B cell (primary cell): ENCODE measurements at regions of chr1 and their contacts with region 1.

Region 1: GRCh38 chr1:181088079-181089016 is at the start of gene IER5:
- DNase-seq: peak; percentile 99
- ATAC-seq: peak; percentile 74
- H3K4me3 ChIP-seq: peak within 1 kb of the TSS; percentile 94 to 99 (median 95)
- H3K4me3 Mint-ChIP-seq: peak within 1 kb of the TSS; percentile 100
- H3K27ac ChIP-seq: peak within 1 kb of the TSS; percentile 98 to 99
- H3K27ac Mint-ChIP-seq: peak within 1 kb of the TSS; percentile 100
- H3K4me1 ChIP-seq: peaks cover 42 to 48% of the 10 kb centered on the region in 2 donors
- H3K4me1 Mint-ChIP-seq: peaks cover 49% of the 10 kb centered on the region
- H3K27me3 ChIP-seq: no peaks in the 10 kb centered on the region
- H3K27me3 Mint-ChIP-seq: no peaks in the 10 kb centered on the region
- CTCF ChIP-seq: no peak
- total RNA-seq, gene IER5: 96.9 and 98.1 TPM in 2 replicates

Region 2: GRCh38 chr1:180502360-180503273 is 585.7 kb before region 1 on chr1 and contains the start of gene ACBD6:
- CTCF ChIA-PET with region 1: interaction called, 3 read pairs
- POLR2A ChIA-PET with region 1: interaction called, 3 read pairs
- intact Hi-C with region 1: loop called (anchors 2 kb)
- DNase-seq: peak; percentile 92
- ATAC-seq: peak; percentile 82
- H3K4me3 ChIP-seq: peak within 1 kb of the TSS; percentile 69 to 97 (median 84)
- H3K4me3 Mint-ChIP-seq: peak within 1 kb of the TSS; percentile 95
- H3K27ac ChIP-seq: peak within 1 kb of the TSS; percentile 74 to 87
- H3K27ac Mint-ChIP-seq: peak within 1 kb of the TSS; percentile 98
- H3K4me1 ChIP-seq: peaks cover 13 to 19% of the 10 kb centered on the region in 2 donors
- H3K4me1 Mint-ChIP-seq: peaks cover 32% of the 10 kb centered on the region
- H3K27me3 ChIP-seq: no peaks in the 10 kb centered on the region
- H3K27me3 Mint-ChIP-seq: no peaks in the 10 kb centered on the region
- CTCF ChIP-seq: no peak
- total RNA-seq, gene ACBD6: 80.9 and 82.8 TPM in 2 replicates

Region 3: GRCh38 chr1:181021811-181022434 is 66.4 kb before region 1 on chr1:
- CTCF ChIA-PET with region 1: interaction called, 4 read pairs
- POLR2A ChIA-PET with region 1: interaction called, 5 read pairs
- intact Hi-C with region 1: loop called (anchors 2 kb)
- DNase-seq: peak; percentile 71
- ATAC-seq: peak; percentile 4
- H3K4me3 ChIP-seq: peak overlapping the region; percentile 79 to 95 (median 88)
- H3K4me3 Mint-ChIP-seq: peak overlapping the region; percentile 93
- H3K27ac ChIP-seq: peak overlapping the region; percentile 54 to 82
- H3K27ac Mint-ChIP-seq: peak overlapping the region; percentile 98
- H3K4me1 ChIP-seq: peaks cover 24 to 29% of the 10 kb centered on the region in 2 donors
- H3K4me1 Mint-ChIP-seq: peaks cover 41% of the 10 kb centered on the region
- H3K27me3 ChIP-seq: no peaks in the 10 kb centered on the region
- H3K27me3 Mint-ChIP-seq: no peaks in the 10 kb centered on the region
- CTCF ChIP-seq: no peak

Region 4: DNA sequence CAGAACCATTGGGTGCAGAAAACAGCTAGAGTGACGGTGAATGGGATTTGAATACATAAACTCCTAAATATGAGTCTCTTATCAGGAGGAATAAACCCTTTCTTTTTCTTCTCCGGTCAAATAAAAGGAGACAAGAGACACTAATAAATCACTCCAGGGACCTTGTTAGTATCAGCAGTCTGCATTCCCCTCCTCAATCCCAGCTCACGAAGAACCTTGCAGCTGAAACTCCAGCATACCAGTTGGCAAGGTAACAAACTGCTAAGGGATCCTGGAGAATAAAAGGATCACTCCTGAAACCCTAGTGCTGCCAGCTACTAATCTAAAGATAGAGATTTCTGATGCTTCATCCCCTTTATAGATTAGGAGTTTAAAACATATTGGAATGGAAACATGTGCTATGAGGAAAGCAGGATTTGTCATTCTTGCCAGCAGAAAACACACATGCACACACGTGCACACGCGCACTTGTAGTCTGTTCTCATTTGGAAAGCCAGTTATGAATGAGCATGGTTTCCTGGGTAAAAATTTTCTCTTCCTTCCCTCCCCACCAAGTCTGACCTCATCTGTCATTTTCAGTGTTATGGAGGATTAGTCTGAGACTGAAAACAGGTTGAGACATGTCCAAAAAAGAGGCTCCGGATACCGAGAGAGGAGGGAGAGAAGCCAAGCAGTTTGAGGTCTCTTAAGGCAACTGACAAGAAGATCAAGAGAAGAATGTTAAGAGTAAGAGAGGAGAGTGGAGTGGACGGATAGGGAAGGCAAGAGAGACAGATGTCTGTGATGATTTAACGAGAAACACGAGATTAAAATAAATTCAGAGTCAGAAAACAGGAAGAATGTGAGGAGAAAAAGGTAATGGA is 11.0 kb after region 1 on chr1:
- CTCF ChIA-PET with region 1: interaction called, 141 read pairs
- POLR2A ChIA-PET with region 1: interaction called, 98 read pairs
- intact Hi-C with region 1: no loop called
- DNase-seq: no peak
- ATAC-seq: no peak
- H3K4me3 ChIP-seq: no peak overlapping the region
- H3K4me3 Mint-ChIP-seq: peak overlapping the region; percentile 28
- H3K27ac ChIP-seq: no peak overlapping the region
- H3K27ac Mint-ChIP-seq: peak overlapping the region; percentile 11
- H3K4me1 ChIP-seq: peaks cover 24 to 26% of the 10 kb centered on the region in 2 donors
- H3K4me1 Mint-ChIP-seq: peaks cover 53% of the 10 kb centered on the region
- H3K27me3 ChIP-seq: no peaks in the 10 kb centered on the region
- H3K27me3 Mint-ChIP-seq: no peaks in the 10 kb centered on the region
- CTCF ChIP-seq: no peak

Region 5: GRCh38 chr1:181134543-181135362 is 46.4 kb after region 1 on chr1:
- CTCF ChIA-PET with region 1: interaction called, 672 read pairs
- POLR2A ChIA-PET with region 1: interaction called, 109 read pairs
- intact Hi-C with region 1: loop called (anchors 1 kb)
- DNase-seq: peak; percentile 77
- ATAC-seq: peak; percentile 53
- H3K4me3 ChIP-seq: peak overlapping the region in 4 of 5 experiments; percentile 11 to 42 (median 17)
- H3K4me3 Mint-ChIP-seq: peak overlapping the region; percentile 86
- H3K27ac ChIP-seq: peak overlapping the region; percentile 91 to 92
- H3K27ac Mint-ChIP-seq: peak overlapping the region; percentile 99
- H3K4me1 ChIP-seq: peaks cover 77 to 85% of the 10 kb centered on the region in 2 donors
- H3K4me1 Mint-ChIP-seq: peaks cover 95% of the 10 kb centered on the region
- H3K27me3 ChIP-seq: no peaks in the 10 kb centered on the region
- H3K27me3 Mint-ChIP-seq: no peaks in the 10 kb centered on the region
- CTCF ChIP-seq: no peak

Region 6: GRCh38 chr1:181160998-181161870 is 72.9 kb after region 1 on chr1:
- CTCF ChIA-PET with region 1: interaction called, 60 read pairs
- POLR2A ChIA-PET with region 1: no interaction called
- intact Hi-C with region 1: loop called (anchors 1 kb)
- DNase-seq: no peak
- ATAC-seq: no peak
- H3K4me3 ChIP-seq: no peak overlapping the region
- H3K4me3 Mint-ChIP-seq: no peak overlapping the region
- H3K27ac ChIP-seq: no peak overlapping the region
- H3K27ac Mint-ChIP-seq: no peak overlapping the region
- H3K4me1 ChIP-seq: peaks cover 6 to 15% of the 10 kb centered on the region in 2 donors
- H3K4me1 Mint-ChIP-seq: peaks cover 8% of the 10 kb centered on the region
- H3K27me3 ChIP-seq: peaks cover 0 to 2% (median 0%) of the 10 kb centered on the region in 4 experiments
- H3K27me3 Mint-ChIP-seq: no peaks in the 10 kb centered on the region
- CTCF ChIP-seq: no peak